ENCODE measurements at regions of chr21 and their contacts with region 1.

Region 1: GRCh38 chr21:42220138-42220701 is 1.3 kb downstream of the ABCG1 start:
- DNase-seq: peak; percentile 80
- H3K4me3 Mint-ChIP-seq: peak overlapping the region; percentile 78
- H3K27ac Mint-ChIP-seq: peak overlapping the region; percentile 85
- H3K4me1 Mint-ChIP-seq: peaks cover 21% of the 10 kb centered on the region
- H3K27me3 Mint-ChIP-seq: no peaks in the 10 kb centered on the region

Region 2: GRCh38 chr21:42187976-42188653 is 32.1 kb before region 1 on chr21:
- CTCF ChIA-PET with region 1: interaction called, 5 read pairs
- POLR2A ChIA-PET with region 1: interaction called, 20 read pairs
- intact Hi-C with region 1: loop called (anchors 1 kb)
- DNase-seq: peak; percentile 92
- H3K4me3 Mint-ChIP-seq: peak overlapping the region; percentile 60
- H3K27ac Mint-ChIP-seq: peak overlapping the region; percentile 96
- H3K4me1 Mint-ChIP-seq: peaks cover 62% of the 10 kb centered on the region
- H3K27me3 Mint-ChIP-seq: no peaks in the 10 kb centered on the region

Region 3: GRCh38 chr21:42193131-42193671 is 27.0 kb before region 1 on chr21:
- CTCF ChIA-PET with region 1: interaction called, 3 read pairs
- POLR2A ChIA-PET with region 1: interaction called, 20 read pairs
- intact Hi-C with region 1: loop called (anchors 1 kb)
- DNase-seq: peak; percentile 86
- H3K4me3 Mint-ChIP-seq: peak overlapping the region; percentile 15
- H3K27ac Mint-ChIP-seq: peak overlapping the region; percentile 38
- H3K4me1 Mint-ChIP-seq: peaks cover 46% of the 10 kb centered on the region
- H3K27me3 Mint-ChIP-seq: no peaks in the 10 kb centered on the region

Region 4: DNA sequence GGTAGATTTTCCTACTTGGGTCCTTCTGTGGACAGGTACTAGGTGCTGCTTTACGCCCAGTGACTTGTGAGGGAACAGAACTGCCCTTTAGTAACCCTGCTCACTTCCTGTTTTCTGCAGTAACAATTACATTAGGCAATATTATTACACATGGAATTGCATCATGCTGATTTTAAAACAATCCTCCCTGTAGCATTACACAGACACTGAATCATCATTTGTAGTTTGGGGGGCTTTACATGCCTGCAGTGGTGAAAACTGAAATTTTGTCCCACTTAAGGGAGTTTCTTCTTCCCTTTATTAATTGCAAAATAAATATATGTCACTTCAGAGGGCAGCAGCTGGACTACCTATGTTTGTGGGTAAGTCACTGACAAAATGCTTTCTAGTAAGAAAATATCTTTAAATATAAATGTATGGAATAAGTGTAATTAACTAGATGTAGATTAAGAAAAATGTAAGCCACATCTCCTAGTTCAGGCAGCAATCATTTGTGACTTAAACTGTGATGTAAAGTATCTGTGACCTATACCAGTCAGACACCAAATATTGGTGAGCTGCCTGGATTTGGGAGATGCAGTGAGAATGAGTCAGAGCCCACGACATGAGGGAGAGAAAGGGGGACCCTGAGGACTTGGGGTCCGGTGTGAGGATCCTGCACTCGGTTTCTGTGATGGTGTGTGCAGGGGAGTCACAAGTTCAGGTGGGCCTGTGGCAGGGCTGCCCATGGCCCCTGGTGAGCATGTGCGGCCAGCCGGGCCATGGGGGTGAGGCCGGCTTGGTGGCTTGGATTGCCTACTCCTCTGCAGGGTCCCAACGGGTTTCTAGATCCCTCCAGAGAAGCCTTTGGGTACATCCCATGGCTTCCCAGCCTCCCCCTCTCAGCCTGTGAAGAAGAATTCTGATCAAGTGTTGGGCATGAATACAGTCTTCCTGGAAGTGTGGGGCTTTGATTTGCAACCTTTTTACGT is 20.4 kb before region 1 on chr21:
- CTCF ChIA-PET with region 1: no interaction called
- POLR2A ChIA-PET with region 1: interaction called, 13 read pairs
- intact Hi-C with region 1: no loop called
- DNase-seq: no peak
- H3K4me3 Mint-ChIP-seq: no peak overlapping the region
- H3K27ac Mint-ChIP-seq: peak overlapping the region; percentile 65
- H3K4me1 Mint-ChIP-seq: peaks cover 44% of the 10 kb centered on the region
- H3K27me3 Mint-ChIP-seq: no peaks in the 10 kb centered on the region

Region 5: DNA sequence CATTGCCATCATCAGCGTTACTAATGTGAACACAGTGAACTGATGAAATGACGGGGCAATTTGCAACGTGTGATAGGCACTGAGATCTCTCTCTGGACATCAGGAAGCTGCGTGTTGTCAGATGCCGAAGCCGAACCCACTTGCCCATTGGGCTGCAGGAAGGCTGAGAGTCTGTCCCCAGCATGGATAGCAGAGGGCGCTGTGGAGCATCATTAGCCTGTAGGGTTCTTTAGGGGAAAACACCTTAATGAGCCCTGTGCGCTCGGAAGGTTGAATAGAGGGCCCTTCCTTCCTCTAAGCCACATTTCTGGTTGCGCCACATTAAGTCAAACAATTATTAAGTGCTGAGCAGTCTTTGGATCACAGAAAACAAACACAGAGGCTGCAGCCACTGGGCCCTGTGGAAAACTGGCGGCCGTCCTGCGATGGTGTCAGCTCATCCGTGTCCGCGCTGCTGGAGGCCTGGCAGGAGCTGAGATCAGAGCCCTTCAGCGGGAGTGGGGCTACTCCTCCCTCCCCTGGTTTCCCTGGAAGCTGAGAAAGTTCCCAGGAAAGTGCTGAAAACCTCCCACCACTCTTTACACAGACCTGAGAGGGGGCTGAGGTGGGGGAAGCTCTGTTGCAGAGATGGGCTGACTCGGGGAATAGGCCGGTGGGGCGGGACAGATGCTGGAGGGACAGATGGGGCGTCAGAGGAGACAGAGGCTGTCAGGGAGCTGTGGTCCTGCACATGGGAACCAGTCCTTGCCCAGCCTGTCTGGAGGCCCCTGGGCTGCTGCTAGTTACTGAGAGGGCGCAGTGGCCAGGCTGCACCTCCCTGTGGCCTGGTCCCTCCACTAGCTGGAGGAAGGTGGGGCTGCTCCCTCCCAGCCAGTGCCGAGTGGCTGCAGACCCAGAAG is 117.9 kb after region 1 on chr21:
- CTCF ChIA-PET with region 1: no interaction called
- POLR2A ChIA-PET with region 1: no interaction called
- intact Hi-C with region 1: no loop called
- DNase-seq: peak; percentile 87
- H3K4me3 Mint-ChIP-seq: no peak overlapping the region
- H3K27ac Mint-ChIP-seq: no peak overlapping the region
- H3K4me1 Mint-ChIP-seq: peaks cover 23% of the 10 kb centered on the region
- H3K27me3 Mint-ChIP-seq: peaks cover 11% of the 10 kb centered on the region

Measured in activated CD4-positive, alpha-beta memory T cell treated with anti-CD3 and anti-CD28 coated beads for 36 hours (primary cell).